ENCODE measurements at regions of chr13 and their contacts with region 1.

Region 1: GRCh38 chr13:37869756-37870488 is at the start of gene TRPC4:
- DNase-seq: peak; percentile 20 to 71 (median 62)
- ATAC-seq: peak; percentile 85 to 90 (median 87)
- H3K4me3 ChIP-seq: peak within 1 kb of the TSS; percentile 37 to 64 (median 52)
- H3K27ac ChIP-seq: peak within 1 kb of the TSS in 3 of 12 donors; percentile 24 to 60 (median 47)
- H3K4me1 ChIP-seq: peaks cover 0 to 12% (median 0%) of the 10 kb centered on the region in 12 donors
- H3K27me3 ChIP-seq: peaks cover 0 to 36% (median 8%) of the 10 kb centered on the region in 9 donors
- CTCF ChIP-seq: peak in 11 of 12 donors; percentile 14 to 60 (median 42)
- POLR2A ChIP-seq: no peak
- total RNA-seq, gene TRPC4: 0.25 to 2.5 (median 0.85) TPM

Region 2: GRCh38 chr13:37816276-37816675 is 53.6 kb before region 1 on chr13:
- intact Hi-C with region 1: no loop called
- DNase-seq: no peak
- ATAC-seq: no peak
- H3K4me3 ChIP-seq: no peak overlapping the region
- H3K27ac ChIP-seq: no peak overlapping the region
- H3K4me1 ChIP-seq: no peaks in the 10 kb centered on the region
- H3K27me3 ChIP-seq: no peaks in the 10 kb centered on the region
- CTCF ChIP-seq: no peak
- POLR2A ChIP-seq: no peak

Region 3: GRCh38 chr13:37833411-37833810 is 36.5 kb before region 1 on chr13:
- intact Hi-C with region 1: no loop called
- DNase-seq: no peak
- ATAC-seq: no peak
- H3K4me3 ChIP-seq: no peak overlapping the region
- H3K27ac ChIP-seq: no peak overlapping the region
- H3K4me1 ChIP-seq: no peaks in the 10 kb centered on the region
- H3K27me3 ChIP-seq: no peaks in the 10 kb centered on the region
- CTCF ChIP-seq: no peak
- POLR2A ChIP-seq: no peak

Region 4: GRCh38 chr13:37914781-37915391 is 45.0 kb after region 1 on chr13:
- intact Hi-C with region 1: loop called in 1 of 10 experiments (anchors 5 kb)
- DNase-seq: no peak
- ATAC-seq: no peak
- H3K4me3 ChIP-seq: no peak overlapping the region
- H3K27ac ChIP-seq: no peak overlapping the region
- H3K4me1 ChIP-seq: peaks cover 0 to 8% (median 0%) of the 10 kb centered on the region in 12 donors
- H3K27me3 ChIP-seq: no peaks in the 10 kb centered on the region
- CTCF ChIP-seq: no peak
- POLR2A ChIP-seq: no peak

Region 5: DNA sequence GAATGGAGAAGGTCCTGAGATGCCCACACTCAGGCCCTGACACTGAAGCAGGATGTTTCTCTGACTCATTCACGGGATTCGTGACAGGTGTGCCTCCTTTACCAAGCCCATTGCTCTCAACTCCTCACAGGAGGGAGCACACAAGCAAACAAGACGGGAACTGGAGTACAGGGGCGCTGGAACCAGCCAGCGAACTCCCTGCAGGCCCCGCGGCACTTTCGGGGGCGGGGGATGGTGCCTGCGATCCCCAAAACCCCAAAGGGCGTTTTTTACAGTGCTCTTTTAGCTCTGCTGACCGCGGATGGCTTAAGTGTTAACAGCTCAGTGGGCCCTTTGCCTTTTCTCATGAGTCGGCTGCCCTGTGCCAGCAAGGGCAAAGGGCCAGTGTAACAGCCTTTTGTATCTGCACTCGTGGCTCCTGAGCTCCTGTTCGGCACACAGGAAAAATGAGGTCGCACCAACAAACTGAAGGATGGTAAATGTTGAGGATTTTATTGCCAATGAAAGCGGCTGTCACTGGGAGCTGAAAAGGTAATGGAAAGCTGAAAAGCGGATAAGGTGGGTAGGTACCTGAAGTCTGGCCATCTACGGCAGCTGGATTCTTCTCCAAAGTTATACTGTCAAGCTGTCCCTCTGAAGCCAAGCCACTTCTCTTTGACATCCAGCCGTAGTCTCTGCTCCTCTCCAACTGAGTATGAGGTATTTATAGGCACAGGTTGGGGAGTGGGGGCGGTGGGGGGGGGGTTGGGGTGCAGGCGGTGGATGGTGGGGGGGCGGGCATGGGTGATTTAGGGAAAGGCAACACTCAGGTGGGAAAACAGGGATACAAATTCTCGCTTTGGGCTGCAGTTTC is 64.6 kb after region 1 on chr13:
- intact Hi-C with region 1: loop called in 2 of 10 experiments (anchors 10 kb)
- DNase-seq: peak in 3 of 5 donors; percentile 50 to 58 (median 56)
- ATAC-seq: peak; percentile 71 to 84 (median 77)
- H3K4me3 ChIP-seq: peak overlapping the region in 11 of 12 donors; percentile 14 to 51 (median 34)
- H3K27ac ChIP-seq: peak overlapping the region in 9 of 12 donors; percentile 2 to 83 (median 54)
- H3K4me1 ChIP-seq: peaks cover 0 to 4% (median 0%) of the 10 kb centered on the region in 12 donors
- H3K27me3 ChIP-seq: no peaks in the 10 kb centered on the region
- CTCF ChIP-seq: no peak
- POLR2A ChIP-seq: no peak

Region 6: GRCh38 chr13:38223089-38223488 is 353.2 kb after region 1 on chr13:
- intact Hi-C with region 1: loop called in 1 of 10 experiments (anchors 5 kb)
- DNase-seq: no peak
- ATAC-seq: no peak
- H3K4me3 ChIP-seq: no peak overlapping the region
- H3K27ac ChIP-seq: no peak overlapping the region
- H3K4me1 ChIP-seq: no peaks in the 10 kb centered on the region
- H3K27me3 ChIP-seq: no peaks in the 10 kb centered on the region
- CTCF ChIP-seq: no peak
- POLR2A ChIP-seq: no peak

Region 7: DNA sequence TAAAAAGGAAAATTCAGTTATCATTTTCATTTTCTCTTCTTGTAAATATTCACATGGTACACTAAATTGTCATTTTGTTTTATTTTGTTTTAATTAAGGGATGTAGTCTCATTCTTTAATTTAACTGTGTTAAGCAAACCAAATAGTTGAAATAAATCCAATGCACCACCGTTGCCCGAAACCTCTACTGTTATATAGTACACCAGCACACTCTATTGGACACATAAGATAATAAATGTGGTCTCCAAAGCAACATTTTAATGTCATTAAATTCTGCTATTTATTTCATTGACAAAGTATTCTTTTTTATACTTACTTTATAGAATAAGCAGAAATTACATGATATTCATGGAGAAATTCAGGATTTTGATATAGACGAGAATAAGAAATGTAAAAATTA is 660.6 kb after region 1 on chr13:
- intact Hi-C with region 1: loop called in 2 of 10 experiments (anchors 5 kb)
- DNase-seq: no peak
- ATAC-seq: peak in 1 of 4 donors; percentile 59
- H3K4me3 ChIP-seq: no peak overlapping the region
- H3K27ac ChIP-seq: no peak overlapping the region
- H3K4me1 ChIP-seq: no peaks in the 10 kb centered on the region
- H3K27me3 ChIP-seq: peaks cover 0 to 10% (median 0%) of the 10 kb centered on the region in 9 donors
- CTCF ChIP-seq: peak in 10 of 12 donors; percentile 10 to 58 (median 48)
- POLR2A ChIP-seq: no peak

Measured in heart left ventricle (tissue), 16 donors.